HCT116 (cell line): ENCODE measurements at regions of chr7 and their contacts with region 1.

Region 1: DNA sequence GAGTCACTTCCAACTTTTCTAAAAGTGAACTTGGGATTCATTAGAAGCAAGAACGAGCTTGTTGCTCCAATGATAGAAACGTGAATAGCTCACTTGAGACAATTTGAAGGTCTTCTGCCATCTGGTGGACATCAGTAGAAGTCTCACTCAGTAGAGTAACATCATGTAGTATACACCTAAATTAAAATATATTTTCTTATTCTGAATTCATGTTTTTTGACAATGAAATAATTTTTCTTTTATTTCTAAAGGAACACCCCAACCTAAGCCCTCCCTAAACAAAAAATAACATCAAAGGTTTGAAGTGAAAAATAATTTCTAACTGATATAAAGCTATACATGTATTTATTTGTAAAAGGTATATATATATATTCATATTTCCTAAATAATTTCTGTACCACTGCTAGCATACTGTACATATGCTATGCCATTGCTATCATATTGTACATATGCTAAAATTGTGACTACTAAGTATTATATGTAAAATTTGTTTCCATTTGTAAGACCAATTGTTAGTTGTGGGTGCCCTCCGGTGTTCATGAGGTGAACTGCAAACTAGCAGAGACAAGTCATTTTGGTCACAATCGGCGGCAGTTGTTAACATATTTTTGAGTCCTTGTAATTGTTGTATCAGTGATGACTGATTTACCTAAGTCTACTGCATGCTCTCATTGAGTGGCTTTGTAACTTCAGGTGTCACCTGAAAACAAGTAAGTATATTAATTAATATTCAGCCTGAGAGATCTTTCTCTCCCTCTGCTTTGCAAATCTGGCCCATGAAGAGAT is 121.9 kb downstream of the PTPRZ1 start:
- DNase-seq: peak; percentile 78
- ATAC-seq: peak; percentile 93
- H3K4me3 ChIP-seq: no peak overlapping the region
- H3K27ac ChIP-seq: no peak overlapping the region
- H3K4me1 ChIP-seq: no peaks in the 10 kb centered on the region
- H3K27me3 ChIP-seq: no peaks in the 10 kb centered on the region
- CTCF ChIP-seq: peak; percentile 73 to 84 (median 75); a peak in 5 of 6 replicates
- POLR2A ChIP-seq: no peak
- RAD21 ChIP-seq: peak; percentile 85

Region 2: DNA sequence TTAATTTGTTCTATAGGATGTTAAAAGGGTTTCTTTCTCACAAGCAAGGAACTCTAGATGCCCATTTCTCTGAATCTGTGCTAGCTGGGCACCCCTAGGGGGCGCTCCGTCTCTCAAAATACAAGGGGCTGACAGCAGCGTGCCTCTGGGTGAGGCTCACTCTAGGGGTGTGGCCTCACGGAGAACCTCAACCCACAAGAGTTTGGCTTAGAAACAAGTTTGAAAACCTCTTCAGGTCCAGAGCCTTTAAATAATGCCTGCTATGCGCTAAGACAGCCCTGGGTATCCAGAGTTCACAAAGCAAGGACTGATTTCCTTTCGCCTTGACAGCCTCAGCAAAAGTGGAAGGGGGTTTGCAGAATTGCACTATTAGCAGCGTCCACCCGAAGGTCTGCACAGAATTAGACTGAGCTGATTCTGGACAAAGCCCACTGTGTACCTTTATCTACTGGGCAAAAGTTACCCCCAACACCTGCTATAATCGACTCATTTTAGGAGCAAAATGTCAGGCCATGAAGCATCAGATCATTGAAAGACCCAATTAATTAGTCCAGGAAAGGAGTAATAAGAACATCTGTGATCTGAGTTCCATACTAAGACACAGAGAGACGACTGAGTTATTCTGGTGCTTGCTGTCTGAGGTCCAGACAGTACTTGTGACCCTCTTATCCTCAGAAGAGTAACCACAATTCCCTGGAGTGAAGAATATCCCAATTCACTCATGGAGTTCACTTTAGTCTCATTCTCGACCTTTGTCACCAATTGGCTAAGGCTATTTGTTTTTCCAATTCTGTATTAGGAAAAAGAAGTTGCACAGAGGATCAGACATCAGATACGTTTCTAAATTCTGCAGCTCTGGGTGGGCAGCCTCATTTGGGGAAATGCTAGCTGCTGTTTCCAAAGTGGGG is 1006.9 kb before region 1 on chr7:
- CTCF ChIA-PET with region 1: interaction called, 3 read pairs
- POLR2A ChIA-PET with region 1: no interaction called
- RAD21 ChIA-PET with region 1: no interaction called
- intact Hi-C with region 1: loop called (anchors 2 kb)
- DNase-seq: peak; percentile 81
- ATAC-seq: peak; percentile 92
- H3K4me3 ChIP-seq: peak overlapping the region; percentile 45 to 60
- H3K27ac ChIP-seq: no peak overlapping the region
- H3K4me1 ChIP-seq: peaks cover 0 to 15% of the 10 kb centered on the region in 2 experiments; a peak in 1 of 4 replicates
- H3K27me3 ChIP-seq: no peaks in the 10 kb centered on the region
- CTCF ChIP-seq: peak; percentile 87 to 98 (median 98)
- POLR2A ChIP-seq: no peak
- RAD21 ChIP-seq: peak; percentile 90

Region 3: GRCh38 chr7:121366852-121367431 is 627.9 kb before region 1 on chr7:
- CTCF ChIA-PET with region 1: interaction called, 34 read pairs
- POLR2A ChIA-PET with region 1: interaction called, 3 read pairs
- RAD21 ChIA-PET with region 1: interaction called, 4 to 6 read pairs
- intact Hi-C with region 1: loop called (anchors 1 kb)
- DNase-seq: no peak
- ATAC-seq: 0 out of 2 replicates have a peak, but pooled peaks have one; percentile 45
- H3K4me3 ChIP-seq: no peak overlapping the region
- H3K27ac ChIP-seq: peak overlapping the region; percentile 30; the same call in 1 of the 2 replicates
- H3K4me1 ChIP-seq: peaks cover 34 to 50% of the 10 kb centered on the region in 2 experiments
- H3K27me3 ChIP-seq: no peaks in the 10 kb centered on the region
- CTCF ChIP-seq: peak; percentile 57 to 71 (median 64); a peak in 5 of 6 replicates
- POLR2A ChIP-seq: no peak
- RAD21 ChIP-seq: peak; percentile 69

Region 4: GRCh38 chr7:121563177-121563576 is 431.6 kb before region 1 on chr7:
- CTCF ChIA-PET with region 1: interaction called, 18 read pairs
- POLR2A ChIA-PET with region 1: interaction called, 3 read pairs
- RAD21 ChIA-PET with region 1: no interaction called
- intact Hi-C with region 1: loop called (anchors 5 kb)
- DNase-seq: no peak
- ATAC-seq: peak; percentile 73
- H3K4me3 ChIP-seq: no peak overlapping the region
- H3K27ac ChIP-seq: no peak overlapping the region
- H3K4me1 ChIP-seq: peaks cover 0 to 8% of the 10 kb centered on the region in 2 experiments; a peak in 1 of 4 replicates
- H3K27me3 ChIP-seq: no peaks in the 10 kb centered on the region
- CTCF ChIP-seq: peak in 2 of 3 experiments; percentile 49 to 50; a peak in 4 of 6 replicates
- POLR2A ChIP-seq: no peak
- RAD21 ChIP-seq: 0 out of 2 replicates have a peak, but pooled peaks have one; percentile 5

Region 5: DNA sequence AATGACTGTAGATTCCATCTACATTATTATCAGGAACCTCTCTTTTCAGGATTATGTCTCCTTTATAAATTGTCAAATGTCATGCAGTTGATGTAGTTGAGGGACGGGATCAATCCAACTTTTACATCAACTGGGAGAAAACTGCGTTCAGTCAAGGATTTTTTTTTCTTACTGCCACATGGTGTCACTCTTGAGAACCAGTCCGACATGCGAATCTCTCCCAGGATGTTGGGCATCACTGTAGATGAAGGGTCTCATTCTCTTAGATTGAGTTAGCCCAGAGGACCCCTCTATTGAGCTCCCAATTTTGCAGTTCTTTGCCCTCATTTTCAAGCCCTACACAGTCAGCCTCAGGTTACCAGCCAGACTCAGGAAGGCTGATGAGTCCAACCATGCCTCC is 242.1 kb before region 1 on chr7:
- CTCF ChIA-PET with region 1: interaction called, 15 read pairs
- POLR2A ChIA-PET with region 1: no interaction called
- RAD21 ChIA-PET with region 1: no interaction called
- intact Hi-C with region 1: loop called (anchors 1 kb)
- DNase-seq: peak; percentile 2
- ATAC-seq: peak; percentile 60
- H3K4me3 ChIP-seq: no peak overlapping the region
- H3K27ac ChIP-seq: no peak overlapping the region
- H3K4me1 ChIP-seq: no peaks in the 10 kb centered on the region
- H3K27me3 ChIP-seq: no peaks in the 10 kb centered on the region
- CTCF ChIP-seq: peak; percentile 27 to 57 (median 37); a peak in 4 of 6 replicates
- POLR2A ChIP-seq: no peak
- RAD21 ChIP-seq: peak; percentile 63